ENCODE measurements at regions of chr2 and their contacts with region 1.

Region 1: GRCh38 chr2:27032495-27033252 is at the start of gene TMEM214:
- DNase-seq: peak; percentile 95
- H3K4me3 ChIP-seq: peak within 1 kb of the TSS; percentile 79 to 97 (median 84)
- H3K27ac ChIP-seq: peak within 1 kb of the TSS; percentile 81 to 89 (median 84)
- H3K4me1 ChIP-seq: peaks cover 0 to 30% (median 23%) of the 10 kb centered on the region in 4 donors
- H3K27me3 ChIP-seq: no peaks in the 10 kb centered on the region
- CTCF ChIP-seq: no peak
- EP300 ChIP-seq: no peak
- POLR2A ChIP-seq: peak; percentile 45 to 59
- total RNA-seq, gene TMEM214: 26.4 to 39.4 (median 35.0) TPM

Region 2: DNA sequence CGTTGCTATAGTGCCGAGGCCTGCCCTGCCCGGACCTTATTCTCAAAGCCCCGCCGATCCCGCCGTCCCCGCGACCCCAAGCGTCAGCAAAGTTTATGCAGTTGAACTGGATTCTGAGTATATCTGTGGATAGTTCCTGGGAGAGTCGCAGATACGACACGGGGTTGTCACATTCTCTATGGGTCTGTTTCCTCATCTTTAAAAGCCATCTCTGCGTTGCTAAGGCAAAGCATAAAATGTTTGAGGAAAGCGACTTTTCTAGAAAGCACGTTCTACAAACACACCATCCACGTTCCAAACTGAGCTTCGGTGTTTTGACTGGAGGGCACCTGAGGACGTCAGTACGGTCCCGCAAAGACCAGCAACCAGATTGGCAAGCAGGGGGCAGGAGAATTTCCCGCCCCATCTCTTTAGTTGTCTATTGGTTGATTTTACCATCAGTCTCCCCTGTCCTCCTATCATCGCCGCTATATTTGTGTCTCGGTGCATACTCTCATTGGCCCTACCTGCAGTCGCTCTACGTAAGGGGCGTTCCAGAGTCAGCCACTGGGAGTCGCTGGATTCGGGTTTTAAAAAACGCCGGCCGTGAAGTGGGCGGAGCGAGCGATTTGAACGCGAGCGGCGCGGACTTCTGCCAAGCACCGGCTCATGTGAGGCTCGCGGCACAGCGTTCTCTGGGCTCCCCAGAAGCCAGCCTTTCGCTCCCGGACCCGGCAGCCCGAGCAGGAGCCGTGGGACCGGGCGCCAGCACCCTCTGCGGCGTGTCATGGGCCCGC is 247.1 kb before region 1 on chr2 and contains the start of gene CENPA:
- intact Hi-C with region 1: loop called (anchors 10 kb)
- DNase-seq: peak; percentile 99
- H3K4me3 ChIP-seq: peak within 1 kb of the TSS; percentile 37 to 80 (median 68)
- H3K27ac ChIP-seq: peak within 1 kb of the TSS in 3 of 4 donors; percentile 56 to 66 (median 61)
- H3K4me1 ChIP-seq: peaks cover 0 to 15% (median 11%) of the 10 kb centered on the region in 4 donors
- H3K27me3 ChIP-seq: peaks cover 0 to 28% (median 11%) of the 10 kb centered on the region in 3 donors
- CTCF ChIP-seq: peak in 2 of 4 experiments; percentile 16 to 18
- EP300 ChIP-seq: no peak
- POLR2A ChIP-seq: no peak
- total RNA-seq, gene CENPA: not detected

Region 3: DNA sequence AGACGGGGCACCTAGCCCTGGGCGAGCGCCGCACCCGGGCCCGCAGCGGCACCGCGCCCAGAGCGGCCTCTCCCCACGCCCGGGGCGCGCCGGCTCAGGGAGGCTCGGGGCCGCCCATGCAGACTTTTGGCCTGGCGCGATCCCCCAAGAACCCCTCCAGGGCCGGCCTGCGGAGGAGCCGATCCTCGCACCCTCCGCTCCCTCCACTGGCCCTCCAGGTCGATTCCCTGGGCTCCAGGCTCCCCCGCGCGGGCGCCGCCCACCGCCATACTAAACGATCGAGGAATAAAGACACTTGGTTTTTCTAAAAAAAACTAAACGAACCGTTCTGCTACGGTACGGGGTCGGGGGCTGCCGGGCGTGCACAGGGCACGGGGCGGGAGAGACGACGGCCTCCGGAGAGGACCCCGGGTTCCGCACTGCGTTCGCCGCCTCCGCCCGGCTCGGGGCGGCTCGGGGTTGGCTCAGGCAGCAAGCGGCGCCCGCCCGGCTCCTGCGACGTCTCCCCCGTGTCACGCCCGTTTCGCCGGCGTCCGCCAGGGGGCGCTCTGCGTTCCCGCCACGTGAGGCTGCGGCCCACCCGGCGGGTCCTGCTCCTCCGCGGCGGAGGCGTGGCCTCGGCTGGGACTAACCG is 53.5 kb after region 1 on chr2:
- intact Hi-C with region 1: loop called (anchors 5 kb)
- DNase-seq: peak; percentile 97
- H3K4me3 ChIP-seq: peak overlapping the region; percentile 32 to 63 (median 55)
- H3K27ac ChIP-seq: peak overlapping the region; percentile 88 to 98 (median 96)
- H3K4me1 ChIP-seq: peaks cover 0 to 62% (median 58%) of the 10 kb centered on the region in 4 donors
- H3K27me3 ChIP-seq: no peaks in the 10 kb centered on the region
- CTCF ChIP-seq: peak; percentile 47 to 88 (median 63)
- EP300 ChIP-seq: no peak
- POLR2A ChIP-seq: no peak

Region 4: DNA sequence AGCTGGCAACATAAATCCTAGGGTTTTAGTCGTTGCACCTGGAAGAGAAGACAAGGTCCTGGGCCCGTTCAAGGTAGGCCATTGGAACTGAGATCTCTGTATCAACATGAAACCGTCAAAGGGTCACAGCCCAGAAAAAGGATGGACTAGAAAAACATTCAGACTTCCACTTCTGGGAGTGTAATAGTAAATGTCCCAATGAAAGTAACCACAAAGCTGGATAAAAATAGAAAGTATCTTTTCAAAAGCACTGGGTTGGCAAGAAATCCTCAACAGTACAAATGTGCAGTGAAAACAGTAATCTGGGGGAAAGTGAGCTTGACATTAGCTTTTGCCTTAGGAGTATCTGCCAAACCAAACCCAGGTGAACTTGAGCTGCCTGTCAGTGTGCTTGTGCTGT is 73.3 kb after region 1 on chr2:
- intact Hi-C with region 1: no loop called
- DNase-seq: no peak
- H3K4me3 ChIP-seq: no peak overlapping the region
- H3K27ac ChIP-seq: no peak overlapping the region
- H3K4me1 ChIP-seq: no peaks in the 10 kb centered on the region
- H3K27me3 ChIP-seq: peaks cover 0 to 30% (median 0%) of the 10 kb centered on the region in 3 donors
- CTCF ChIP-seq: no peak
- EP300 ChIP-seq: no peak
- POLR2A ChIP-seq: no peak

Region 5: GRCh38 chr2:27211829-27212627 is 179.4 kb after region 1 on chr2 and contains the starts of genes ATRAID and SLC5A6:
- intact Hi-C with region 1: loop called (anchors 5 kb)
- DNase-seq: peak; percentile 94
- H3K4me3 ChIP-seq: peak within 1 kb of the TSS; percentile 60 to 77 (median 74)
- H3K27ac ChIP-seq: peak within 1 kb of the TSS; percentile 92 to 95 (median 94)
- H3K4me1 ChIP-seq: peaks cover 0 to 31% (median 21%) of the 10 kb centered on the region in 4 donors
- H3K27me3 ChIP-seq: no peaks in the 10 kb centered on the region
- CTCF ChIP-seq: no peak
- EP300 ChIP-seq: no peak
- POLR2A ChIP-seq: peak in 1 of 2 donors; percentile 79
- total RNA-seq, gene ATRAID: 128 to 226 (median 159) TPM
- total RNA-seq, gene SLC5A6: 7.2 to 15.5 (median 12.9) TPM